ENCODE measurements at regions of chr2 and their contacts with region 1.

Region 1: DNA sequence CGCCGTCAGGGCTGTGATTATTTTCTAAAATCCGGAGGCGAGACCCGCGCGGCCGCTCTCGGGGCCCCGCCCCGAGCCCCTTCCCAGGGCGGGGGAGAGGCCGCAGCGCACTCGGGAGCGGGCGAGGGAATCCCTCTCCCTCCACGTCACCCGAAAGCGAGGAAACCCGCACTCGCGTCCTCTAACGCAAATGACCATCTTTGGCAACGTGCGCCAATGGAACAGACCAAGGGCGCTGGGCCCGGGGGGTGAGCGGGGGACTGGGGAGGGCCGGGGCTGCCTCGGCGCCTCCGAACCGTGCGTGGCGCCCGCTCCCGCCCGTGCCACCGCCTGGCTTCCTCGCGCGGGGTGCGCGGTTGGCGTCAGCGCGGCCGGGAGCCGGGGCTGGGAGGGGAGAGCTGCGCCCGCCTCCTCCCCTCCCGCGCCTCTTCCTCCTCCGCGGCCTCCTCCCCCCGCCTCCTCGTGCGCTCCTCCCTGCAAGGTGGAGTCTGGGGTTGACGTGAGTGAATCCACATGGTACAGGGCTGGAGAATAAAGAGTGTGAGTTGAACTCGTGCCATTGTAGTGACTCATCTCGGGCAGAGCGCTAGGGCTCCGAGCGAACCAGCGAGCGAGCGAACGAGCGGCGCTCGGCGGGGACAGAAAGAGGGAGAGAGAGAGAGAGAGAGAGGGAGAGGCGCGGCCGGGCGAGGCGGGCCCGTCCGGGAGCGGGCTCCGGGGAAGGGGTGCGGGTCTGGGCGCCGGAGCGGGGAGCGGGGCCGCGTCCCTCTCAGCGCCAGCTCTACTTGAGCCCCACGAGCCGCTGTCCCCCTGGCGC is at the start of gene FOSL2:
- DNase-seq: peak; percentile 87 to 98 (median 92)
- ATAC-seq: peak; percentile 85
- H3K4me3 ChIP-seq: peak within 1 kb of the TSS; percentile 92
- H3K4me3 Mint-ChIP-seq: peak within 1 kb of the TSS in 7 of 10 donors; percentile 86 to 99 (median 91)
- H3K27ac ChIP-seq: peak within 1 kb of the TSS; percentile 88
- H3K27ac Mint-ChIP-seq: peak within 1 kb of the TSS in 8 of 9 donors; percentile 92 to 98 (median 98)
- H3K4me1 ChIP-seq: peaks cover 16 to 18% of the 10 kb centered on the region in 2 donors
- H3K4me1 Mint-ChIP-seq: peaks cover 6 to 45% (median 21%) of the 10 kb centered on the region in 7 donors
- H3K27me3 ChIP-seq: no peaks in the 10 kb centered on the region
- H3K27me3 Mint-ChIP-seq: no peaks in the 10 kb centered on the region
- total RNA-seq, gene FOSL2: 0.81 to 251 (median 33.9) TPM

Region 2: DNA sequence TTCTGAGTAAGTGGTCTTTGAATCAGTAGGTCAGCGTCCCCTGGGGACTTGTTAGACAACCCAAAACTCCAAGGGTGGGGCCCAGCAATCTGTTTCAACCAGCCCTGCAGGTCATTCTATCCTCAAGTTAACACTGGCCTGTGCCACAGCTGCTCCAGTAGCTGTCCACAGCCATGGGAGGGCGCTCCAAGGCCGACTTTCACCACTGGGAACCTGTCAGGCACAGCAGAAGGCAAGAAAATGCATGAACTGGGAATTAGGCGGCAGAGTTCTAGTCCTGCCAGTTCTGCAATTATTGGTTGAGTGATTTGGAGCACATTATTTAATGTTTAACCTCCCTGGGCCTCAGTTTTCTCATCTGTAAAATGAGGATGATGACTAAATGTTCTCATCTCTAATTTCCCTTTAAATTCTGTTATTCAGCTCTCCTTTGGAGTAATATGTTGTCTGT is 638.3 kb before region 1 on chr2:
- CTCF ChIA-PET with region 1: no interaction called
- POLR2A ChIA-PET with region 1: no interaction called
- intact Hi-C with region 1: loop called in 1 of 2 experiments (anchors 2 kb)
- DNase-seq: peak in 8 of 9 donors; percentile 8 to 79 (median 28)
- ATAC-seq: peak; percentile 89
- H3K4me3 ChIP-seq: no peak overlapping the region
- H3K4me3 Mint-ChIP-seq: no peak overlapping the region
- H3K27ac ChIP-seq: no peak overlapping the region
- H3K27ac Mint-ChIP-seq: no peak overlapping the region
- H3K4me1 ChIP-seq: no peaks in the 10 kb centered on the region
- H3K4me1 Mint-ChIP-seq: peaks cover 0 to 10% (median 0%) of the 10 kb centered on the region in 7 donors
- H3K27me3 ChIP-seq: no peaks in the 10 kb centered on the region
- H3K27me3 Mint-ChIP-seq: peaks cover 0 to 10% (median 5%) of the 10 kb centered on the region in 5 donors

Region 3: GRCh38 chr2:28250006-28250405 is 142.5 kb before region 1 on chr2:
- CTCF ChIA-PET with region 1: no interaction called
- POLR2A ChIA-PET with region 1: no interaction called
- intact Hi-C with region 1: loop called in 1 of 2 experiments (anchors 1 kb)
- DNase-seq: no peak
- ATAC-seq: no peak
- H3K4me3 ChIP-seq: no peak overlapping the region
- H3K4me3 Mint-ChIP-seq: peak overlapping the region in 2 of 10 donors; percentile 1 to 40
- H3K27ac ChIP-seq: no peak overlapping the region
- H3K27ac Mint-ChIP-seq: peak overlapping the region in 2 of 9 donors; percentile 7 to 66
- H3K4me1 ChIP-seq: peaks cover 13 to 22% of the 10 kb centered on the region in 2 donors
- H3K4me1 Mint-ChIP-seq: peaks cover 12 to 53% (median 33%) of the 10 kb centered on the region in 7 donors
- H3K27me3 ChIP-seq: no peaks in the 10 kb centered on the region
- H3K27me3 Mint-ChIP-seq: no peaks in the 10 kb centered on the region

Region 4: DNA sequence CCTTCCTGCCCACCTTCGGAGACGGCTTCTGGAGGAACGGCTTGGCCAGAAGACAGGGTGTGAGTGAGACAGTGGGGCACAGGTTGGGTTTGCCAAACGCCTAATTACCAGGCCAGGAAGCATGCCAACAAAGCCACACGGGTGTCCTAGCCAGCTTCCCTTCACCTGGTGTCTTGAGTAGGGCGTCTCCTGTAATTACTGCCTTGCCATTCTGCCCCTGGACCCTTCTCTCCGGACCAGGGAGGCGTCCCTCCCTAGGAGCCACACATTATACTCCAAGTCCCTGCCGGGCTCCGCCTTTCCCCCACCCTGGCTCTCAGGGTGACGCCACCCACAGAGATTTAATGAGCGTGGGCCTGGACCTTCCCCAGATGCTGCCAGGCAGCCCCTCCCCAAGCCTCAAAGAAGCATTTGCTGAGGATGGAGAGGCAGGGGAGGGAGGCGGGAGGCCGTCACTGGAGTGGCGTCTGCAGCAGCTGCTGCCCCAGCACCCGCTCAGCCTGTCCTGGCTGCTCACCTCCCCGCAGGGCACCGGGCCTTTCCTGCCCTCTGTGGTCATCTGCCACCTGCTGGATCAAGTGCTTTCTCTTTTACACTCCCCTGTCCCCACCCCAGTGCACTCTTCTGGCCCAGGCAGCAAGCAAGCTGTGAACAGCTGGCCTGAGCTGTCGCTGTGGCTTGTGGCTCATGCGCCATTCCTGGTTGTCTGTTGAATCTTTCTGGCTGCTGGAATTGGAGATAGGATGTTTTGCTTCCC is 20.8 kb after region 1 on chr2:
- CTCF ChIA-PET with region 1: no interaction called
- POLR2A ChIA-PET with region 1: interaction called, 9 read pairs
- intact Hi-C with region 1: loop called (anchors 1 kb)
- DNase-seq: no peak
- ATAC-seq: no peak
- H3K4me3 ChIP-seq: no peak overlapping the region
- H3K4me3 Mint-ChIP-seq: no peak overlapping the region
- H3K27ac ChIP-seq: no peak overlapping the region
- H3K27ac Mint-ChIP-seq: peak overlapping the region in 8 of 9 donors; percentile 43 to 96 (median 76)
- H3K4me1 ChIP-seq: peaks cover 28 to 35% of the 10 kb centered on the region in 2 donors
- H3K4me1 Mint-ChIP-seq: peaks cover 23 to 48% (median 39%) of the 10 kb centered on the region in 7 donors
- H3K27me3 ChIP-seq: no peaks in the 10 kb centered on the region
- H3K27me3 Mint-ChIP-seq: no peaks in the 10 kb centered on the region

Region 5: GRCh38 chr2:28566521-28567041 is 174.1 kb after region 1 on chr2:
- CTCF ChIA-PET with region 1: no interaction called
- POLR2A ChIA-PET with region 1: no interaction called
- intact Hi-C with region 1: loop called in 1 of 2 experiments (anchors 1 kb)
- DNase-seq: peak; percentile 81 to 96 (median 90)
- ATAC-seq: peak; percentile 100
- H3K4me3 ChIP-seq: peak overlapping the region; percentile 74
- H3K4me3 Mint-ChIP-seq: peak overlapping the region; percentile 84 to 95 (median 92)
- H3K27ac ChIP-seq: peak overlapping the region; percentile 84
- H3K27ac Mint-ChIP-seq: peak overlapping the region; percentile 59 to 96 (median 92)
- H3K4me1 ChIP-seq: peaks cover 6 to 12% of the 10 kb centered on the region in 2 donors
- H3K4me1 Mint-ChIP-seq: peaks cover 6 to 24% (median 16%) of the 10 kb centered on the region in 7 donors
- H3K27me3 ChIP-seq: peaks cover 0 to 3% of the 10 kb centered on the region in 2 donors
- H3K27me3 Mint-ChIP-seq: peaks cover 0 to 6% (median 0%) of the 10 kb centered on the region in 5 donors

Region 6: GRCh38 chr2:28810384-28811285 is 418.1 kb after region 1 on chr2 and contains the start of gene SPDYA:
- CTCF ChIA-PET with region 1: no interaction called
- POLR2A ChIA-PET with region 1: no interaction called
- intact Hi-C with region 1: loop called in 1 of 2 experiments (anchors 2 kb)
- DNase-seq: peak; percentile 65 to 88 (median 77)
- ATAC-seq: peak; percentile 96
- H3K4me3 ChIP-seq: peak within 1 kb of the TSS; percentile 63
- H3K4me3 Mint-ChIP-seq: peak within 1 kb of the TSS; percentile 76 to 94 (median 84)
- H3K27ac ChIP-seq: peak within 1 kb of the TSS; percentile 50
- H3K27ac Mint-ChIP-seq: peak within 1 kb of the TSS; percentile 11 to 73 (median 59)
- H3K4me1 ChIP-seq: peaks cover 5 to 9% of the 10 kb centered on the region in 2 donors
- H3K4me1 Mint-ChIP-seq: peaks cover 7 to 23% (median 16%) of the 10 kb centered on the region in 7 donors
- H3K27me3 ChIP-seq: no peaks in the 10 kb centered on the region
- H3K27me3 Mint-ChIP-seq: peaks cover 0 to 8% (median 0%) of the 10 kb centered on the region in 5 donors
- total RNA-seq, gene SPDYA: 1.3 to 9.8 (median 4.6) TPM

Measured in naive thymus-derived CD4-positive, alpha-beta T cell (primary cell).